OCI-LY7 (cell line): ENCODE measurements at regions of chr6 and their contacts with region 1.

Region 1: GRCh38 chr6:37102279-37103168 is 67.4 kb upstream of the PIM1 start:
- DNase-seq: peak; percentile 86
- H3K4me3 ChIP-seq: peak overlapping the region; percentile 64
- H3K27ac ChIP-seq: peak overlapping the region; percentile 74
- H3K4me1 ChIP-seq: peaks cover 54% of the 10 kb centered on the region
- CTCF ChIP-seq: peak; percentile 38; the same call in 1 of the 2 replicates

Region 2: GRCh38 chr6:35238843-35239311 is 1863.6 kb before region 1 on chr6:
- CTCF ChIA-PET with region 1: no interaction called
- POLR2A ChIA-PET with region 1: no interaction called
- intact Hi-C with region 1: no loop called
- DNase-seq: no peak
- H3K4me3 ChIP-seq: no peak overlapping the region
- H3K27ac ChIP-seq: no peak overlapping the region
- H3K4me1 ChIP-seq: no peaks in the 10 kb centered on the region
- CTCF ChIP-seq: no peak

Region 3: GRCh38 chr6:36885461-36886401 is 216.8 kb before region 1 on chr6 and contains the start of gene C6orf89:
- CTCF ChIA-PET with region 1: no interaction called
- POLR2A ChIA-PET with region 1: no interaction called
- intact Hi-C with region 1: loop called (anchors 5 kb)
- DNase-seq: peak; percentile 100
- H3K4me3 ChIP-seq: peak within 1 kb of the TSS; percentile 82
- H3K27ac ChIP-seq: peak within 1 kb of the TSS; percentile 40
- H3K4me1 ChIP-seq: peaks cover 24% of the 10 kb centered on the region
- CTCF ChIP-seq: peak; percentile 87
- total RNA-seq, gene C6orf89: 14.7 and 20.1 TPM in 2 replicates

Region 4: GRCh38 chr6:37051138-37052026 is 51.1 kb before region 1 on chr6:
- CTCF ChIA-PET with region 1: no interaction called
- POLR2A ChIA-PET with region 1: interaction called, 4 read pairs
- intact Hi-C with region 1: loop called (anchors 1 kb)
- DNase-seq: peak; percentile 92
- H3K4me3 ChIP-seq: no peak overlapping the region
- H3K27ac ChIP-seq: no peak overlapping the region
- H3K4me1 ChIP-seq: peaks cover 41% of the 10 kb centered on the region
- CTCF ChIP-seq: peak; percentile 94

Region 5: GRCh38 chr6:37155394-37156312 is 53.1 kb after region 1 on chr6:
- CTCF ChIA-PET with region 1: no interaction called
- POLR2A ChIA-PET with region 1: interaction called, 7 read pairs
- intact Hi-C with region 1: loop called (anchors 1 kb)
- DNase-seq: peak; percentile 97
- H3K4me3 ChIP-seq: peak overlapping the region; percentile 58
- H3K27ac ChIP-seq: peak overlapping the region; percentile 93
- H3K4me1 ChIP-seq: peaks cover 46% of the 10 kb centered on the region
- CTCF ChIP-seq: no peak

Region 6: DNA sequence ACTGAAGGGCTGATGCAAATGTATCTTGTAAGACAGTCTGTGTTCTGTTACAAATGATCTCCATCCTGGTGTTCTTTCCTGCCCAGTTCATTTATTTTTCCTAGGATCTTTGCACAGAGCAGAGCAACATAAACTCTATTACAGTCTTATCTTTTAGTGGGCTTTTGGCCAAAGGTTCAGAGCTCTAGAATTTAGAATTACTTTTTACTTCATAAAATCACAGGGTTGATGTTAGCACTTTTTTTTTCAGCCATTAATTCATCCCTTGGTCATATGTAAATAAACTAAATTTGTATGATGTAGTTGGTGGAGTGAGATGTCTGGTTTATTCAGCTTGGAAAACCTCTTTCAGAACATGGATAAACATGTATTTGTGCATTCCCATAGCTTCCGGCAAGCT is 898.9 kb after region 1 on chr6:
- CTCF ChIA-PET with region 1: no interaction called
- POLR2A ChIA-PET with region 1: no interaction called
- intact Hi-C with region 1: no loop called
- DNase-seq: no peak
- H3K4me3 ChIP-seq: no peak overlapping the region
- H3K27ac ChIP-seq: no peak overlapping the region
- H3K4me1 ChIP-seq: no peaks in the 10 kb centered on the region
- CTCF ChIP-seq: no peak